ENCODE measurements at regions of chr14 and their contacts with region 1.

Region 1: GRCh38 chr14:54329082-54329695 is 67.6 kb upstream of the CDKN3 start:
- DNase-seq: peak; percentile 74
- H3K4me3 Mint-ChIP-seq: no peak overlapping the region
- H3K27ac Mint-ChIP-seq: no peak overlapping the region
- H3K4me1 Mint-ChIP-seq: peaks cover 6% of the 10 kb centered on the region
- H3K27me3 Mint-ChIP-seq: no peaks in the 10 kb centered on the region
- CTCF ChIP-seq: peak; percentile 88

Region 2: DNA sequence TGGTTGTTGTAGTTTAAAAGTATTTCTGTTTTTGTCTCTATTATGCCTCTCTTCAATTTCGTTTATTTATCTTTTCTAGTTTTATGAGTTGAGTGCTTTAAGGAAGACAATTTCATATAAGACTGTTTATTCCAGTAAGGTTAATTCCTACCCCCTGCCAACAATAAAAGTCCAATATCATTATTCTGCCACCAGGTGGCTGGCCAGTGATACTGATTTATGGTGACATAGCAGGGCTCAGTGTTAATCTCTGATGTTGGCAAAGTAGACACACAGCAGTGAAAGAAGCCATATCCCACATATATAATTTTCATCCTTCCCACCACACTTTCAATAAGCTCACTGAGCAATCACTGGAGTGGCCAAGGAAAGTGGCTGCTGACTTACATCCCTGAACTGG is 303.5 kb before region 1 on chr14:
- CTCF ChIA-PET with region 1: interaction called, 4 read pairs
- POLR2A ChIA-PET with region 1: no interaction called
- intact Hi-C with region 1: loop called (anchors 1 kb)
- DNase-seq: peak; percentile 65
- H3K4me3 Mint-ChIP-seq: no peak overlapping the region
- H3K27ac Mint-ChIP-seq: no peak overlapping the region
- H3K4me1 Mint-ChIP-seq: no peaks in the 10 kb centered on the region
- H3K27me3 Mint-ChIP-seq: no peaks in the 10 kb centered on the region
- CTCF ChIP-seq: peak; percentile 36

Region 3: DNA sequence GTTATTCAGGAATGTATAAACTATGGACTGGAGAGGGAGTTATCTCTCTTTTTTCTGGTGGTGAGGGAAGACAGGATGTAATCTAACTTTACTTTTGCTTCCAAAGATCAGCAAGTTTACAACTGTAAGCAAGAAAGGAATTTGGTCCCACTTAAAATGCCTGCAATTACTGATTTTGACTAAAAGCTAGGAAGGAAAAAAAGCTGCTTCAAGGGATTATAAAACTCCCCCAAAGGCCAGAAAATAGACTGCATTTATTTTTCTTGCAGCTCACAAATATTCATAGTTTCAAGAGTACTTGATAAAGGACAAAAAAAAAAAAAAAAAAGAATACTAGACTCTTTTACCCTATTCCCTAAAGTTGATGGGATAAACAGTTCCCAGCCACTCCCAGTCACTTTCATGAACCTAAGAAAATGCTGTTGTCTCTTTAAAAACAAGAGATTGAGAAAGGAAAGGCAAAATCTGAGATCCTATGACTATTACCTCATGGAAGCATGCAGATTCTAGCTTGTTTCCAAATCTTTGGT is 243.9 kb before region 1 on chr14:
- CTCF ChIA-PET with region 1: interaction called, 10 read pairs
- POLR2A ChIA-PET with region 1: no interaction called
- intact Hi-C with region 1: loop called (anchors 2 kb)
- DNase-seq: no peak
- H3K4me3 Mint-ChIP-seq: no peak overlapping the region
- H3K27ac Mint-ChIP-seq: no peak overlapping the region
- H3K4me1 Mint-ChIP-seq: no peaks in the 10 kb centered on the region
- H3K27me3 Mint-ChIP-seq: no peaks in the 10 kb centered on the region
- CTCF ChIP-seq: no peak

Region 4: GRCh38 chr14:54169254-54169924 is 159.8 kb before region 1 on chr14:
- CTCF ChIA-PET with region 1: interaction called, 27 read pairs
- POLR2A ChIA-PET with region 1: interaction called, 3 read pairs
- intact Hi-C with region 1: no loop called
- DNase-seq: peak; percentile 60
- H3K4me3 Mint-ChIP-seq: no peak overlapping the region
- H3K27ac Mint-ChIP-seq: peak overlapping the region; percentile 61
- H3K4me1 Mint-ChIP-seq: peaks cover 38% of the 10 kb centered on the region
- H3K27me3 Mint-ChIP-seq: no peaks in the 10 kb centered on the region
- CTCF ChIP-seq: no peak

Region 5: GRCh38 chr14:54253195-54253947 is 75.8 kb before region 1 on chr14:
- CTCF ChIA-PET with region 1: interaction called, 6 read pairs
- POLR2A ChIA-PET with region 1: interaction called, 5 read pairs
- intact Hi-C with region 1: loop called (anchors 1 kb)
- DNase-seq: peak; percentile 92
- H3K4me3 Mint-ChIP-seq: no peak overlapping the region
- H3K27ac Mint-ChIP-seq: peak overlapping the region; percentile 92
- H3K4me1 Mint-ChIP-seq: peaks cover 45% of the 10 kb centered on the region
- H3K27me3 Mint-ChIP-seq: no peaks in the 10 kb centered on the region
- CTCF ChIP-seq: no peak

Region 6: DNA sequence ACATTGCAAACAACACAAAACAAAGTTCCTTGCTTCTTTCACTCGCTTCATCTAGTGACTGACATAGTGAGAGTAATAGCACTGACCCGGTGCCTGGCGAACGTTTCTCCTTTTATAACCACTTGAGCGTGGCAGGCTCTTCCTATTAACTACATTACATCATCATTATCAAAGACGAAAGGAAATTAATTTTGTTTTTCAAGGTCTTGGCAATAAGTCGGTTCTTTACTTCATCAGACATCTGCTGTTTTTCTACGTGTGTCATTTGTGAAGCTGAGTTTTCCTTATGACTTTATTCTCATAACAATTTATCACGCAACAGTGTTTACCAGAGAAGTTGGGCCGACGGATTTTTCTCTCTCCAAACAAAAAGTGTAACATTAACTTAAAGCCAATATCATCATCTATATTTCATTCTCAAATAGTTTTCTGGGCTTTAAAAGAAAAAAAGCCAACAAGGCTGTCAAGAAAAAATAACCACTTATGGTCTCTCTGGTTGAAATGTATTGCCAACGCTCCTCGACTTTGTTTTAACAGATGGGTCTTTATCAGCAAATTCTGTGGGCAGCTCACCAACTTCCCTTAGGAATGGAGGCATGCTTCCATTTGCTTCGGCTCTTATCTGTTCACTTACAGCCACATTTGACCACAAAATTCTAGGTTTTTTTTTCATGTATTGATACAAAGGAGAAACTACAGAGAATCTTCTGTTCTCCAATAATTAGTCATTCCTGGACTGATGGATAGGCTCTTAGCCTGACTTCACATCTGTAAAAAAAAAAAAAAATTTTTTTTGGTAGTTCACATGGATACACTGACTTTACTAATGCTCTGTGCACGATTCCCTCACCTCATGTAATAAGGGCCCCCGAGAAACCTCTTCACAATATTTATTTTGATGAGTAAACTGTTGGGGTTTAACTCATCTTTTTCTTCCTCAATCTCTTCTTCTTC is 29.5 kb before region 1 on chr14:
- CTCF ChIA-PET with region 1: no interaction called
- POLR2A ChIA-PET with region 1: no interaction called
- intact Hi-C with region 1: no loop called
- DNase-seq: no peak
- H3K4me3 Mint-ChIP-seq: no peak overlapping the region
- H3K27ac Mint-ChIP-seq: no peak overlapping the region
- H3K4me1 Mint-ChIP-seq: no peaks in the 10 kb centered on the region
- H3K27me3 Mint-ChIP-seq: no peaks in the 10 kb centered on the region
- CTCF ChIP-seq: no peak

Region 7: DNA sequence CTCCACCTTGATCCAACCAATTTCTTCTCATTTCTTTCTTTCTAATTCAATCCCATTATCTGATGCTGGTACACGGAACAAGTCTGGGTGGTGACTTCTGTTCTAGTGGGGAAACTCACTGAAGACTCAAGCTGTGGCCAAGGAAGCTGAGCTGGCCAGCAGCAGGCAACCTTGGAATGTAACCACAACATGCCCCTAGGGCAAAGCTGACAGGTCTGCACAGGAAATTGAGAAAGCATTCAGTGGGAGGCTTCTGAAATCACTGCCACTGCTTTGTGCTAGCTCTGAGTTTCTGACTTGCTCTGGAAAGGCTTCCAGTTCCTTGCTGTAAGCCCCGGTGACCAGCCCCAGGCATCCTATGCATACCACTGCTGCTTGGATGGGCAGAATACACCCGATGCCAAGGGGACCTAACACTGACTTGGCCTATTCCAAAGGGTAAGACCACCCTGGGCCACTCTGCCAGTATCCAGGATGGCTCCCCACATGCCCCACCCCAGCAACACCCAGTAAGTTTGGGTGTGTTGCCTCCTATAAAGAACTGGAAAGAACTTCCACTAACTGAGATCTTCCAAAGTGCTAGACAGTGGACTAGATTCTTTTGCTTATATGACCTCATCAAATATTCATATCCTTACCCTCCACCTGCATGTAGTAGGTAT is 16.9 kb before region 1 on chr14:
- CTCF ChIA-PET with region 1: interaction called, 12 read pairs
- POLR2A ChIA-PET with region 1: interaction called, 9 read pairs
- intact Hi-C with region 1: no loop called
- DNase-seq: peak; percentile 99
- H3K4me3 Mint-ChIP-seq: peak overlapping the region; percentile 9
- H3K27ac Mint-ChIP-seq: peak overlapping the region; percentile 95
- H3K4me1 Mint-ChIP-seq: peaks cover 42% of the 10 kb centered on the region
- H3K27me3 Mint-ChIP-seq: no peaks in the 10 kb centered on the region
- CTCF ChIP-seq: no peak

Region 8: DNA sequence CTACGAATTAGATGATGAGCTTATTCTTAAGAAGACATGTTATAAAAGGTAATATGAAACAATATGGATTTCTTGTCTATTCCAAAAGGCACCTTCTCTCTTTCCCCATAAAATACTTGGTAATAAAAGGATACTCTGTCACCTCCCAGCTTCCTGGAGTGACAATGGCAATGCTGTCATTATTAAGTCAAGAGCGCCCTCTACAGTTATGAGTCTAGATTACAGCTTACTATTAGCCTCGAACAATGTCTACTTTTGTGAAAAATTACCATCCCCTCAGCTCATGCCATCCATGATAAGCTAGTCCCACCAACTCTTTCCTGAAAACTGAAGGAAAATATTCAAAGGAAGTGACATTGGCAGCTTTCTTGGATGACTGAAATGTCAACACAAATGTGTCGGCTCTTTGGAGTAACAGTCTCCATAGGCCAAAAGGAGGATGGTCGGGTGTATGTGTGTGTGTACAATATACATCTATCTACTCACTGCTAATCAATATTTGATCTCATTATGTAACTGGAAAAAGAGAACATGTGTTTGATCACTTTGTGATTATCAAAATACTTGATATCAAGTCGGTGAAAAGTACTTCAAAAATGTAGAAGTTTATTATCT is 18.9 kb after region 1 on chr14:
- CTCF ChIA-PET with region 1: interaction called, 10 read pairs
- POLR2A ChIA-PET with region 1: no interaction called
- intact Hi-C with region 1: no loop called
- DNase-seq: peak; percentile 68
- H3K4me3 Mint-ChIP-seq: no peak overlapping the region
- H3K27ac Mint-ChIP-seq: no peak overlapping the region
- H3K4me1 Mint-ChIP-seq: peaks cover 6% of the 10 kb centered on the region
- H3K27me3 Mint-ChIP-seq: no peaks in the 10 kb centered on the region
- CTCF ChIP-seq: peak; percentile 82

Region 9: DNA sequence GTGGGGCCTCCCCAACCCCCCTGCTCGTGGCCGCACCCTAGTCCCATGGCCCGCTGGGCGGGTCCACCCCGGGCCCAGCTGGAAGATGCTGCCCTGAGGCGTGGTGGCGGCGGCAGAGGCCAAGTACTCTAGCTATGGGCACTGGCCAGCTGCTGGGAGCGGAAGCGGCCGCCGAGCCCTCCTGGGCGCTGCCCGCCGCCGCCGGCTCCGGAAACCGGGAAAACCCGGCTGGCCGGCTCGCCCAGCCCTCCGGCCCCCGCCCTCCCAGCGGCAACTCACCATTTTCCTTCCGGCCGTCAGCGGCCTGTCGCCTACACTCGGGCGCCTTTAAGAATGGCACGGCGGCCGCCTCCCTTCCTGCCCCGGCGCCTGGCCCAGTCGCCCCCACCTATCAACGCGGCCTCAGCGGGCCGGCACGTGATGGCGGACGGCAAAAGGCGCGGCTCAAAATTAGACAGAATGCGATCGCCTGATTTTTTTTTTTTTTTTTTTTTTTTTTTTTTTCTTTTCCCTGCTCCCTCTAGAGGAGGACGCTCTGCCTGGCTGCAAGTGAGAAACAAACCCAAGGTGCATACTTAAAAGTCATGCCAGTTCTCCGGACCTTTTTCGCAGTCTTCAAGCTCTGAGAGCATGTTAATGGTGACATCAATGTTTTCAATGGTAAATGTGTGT is 159.6 kb after region 1 on chr14 and contains the start of gene GMFB:
- CTCF ChIA-PET with region 1: no interaction called
- POLR2A ChIA-PET with region 1: no interaction called
- intact Hi-C with region 1: no loop called
- DNase-seq: peak; percentile 93
- H3K4me3 Mint-ChIP-seq: peak within 1 kb of the TSS; percentile 73
- H3K27ac Mint-ChIP-seq: peak within 1 kb of the TSS; percentile 78
- H3K4me1 Mint-ChIP-seq: peaks cover 30% of the 10 kb centered on the region
- H3K27me3 Mint-ChIP-seq: no peaks in the 10 kb centered on the region
- CTCF ChIP-seq: peak; percentile 22
- total RNA-seq, gene GMFB: 53.3 and 65.0 TPM in 2 replicates